Panc1 (cell line): ENCODE measurements at regions of chr16 and their contacts with region 1.

Region 1: DNA sequence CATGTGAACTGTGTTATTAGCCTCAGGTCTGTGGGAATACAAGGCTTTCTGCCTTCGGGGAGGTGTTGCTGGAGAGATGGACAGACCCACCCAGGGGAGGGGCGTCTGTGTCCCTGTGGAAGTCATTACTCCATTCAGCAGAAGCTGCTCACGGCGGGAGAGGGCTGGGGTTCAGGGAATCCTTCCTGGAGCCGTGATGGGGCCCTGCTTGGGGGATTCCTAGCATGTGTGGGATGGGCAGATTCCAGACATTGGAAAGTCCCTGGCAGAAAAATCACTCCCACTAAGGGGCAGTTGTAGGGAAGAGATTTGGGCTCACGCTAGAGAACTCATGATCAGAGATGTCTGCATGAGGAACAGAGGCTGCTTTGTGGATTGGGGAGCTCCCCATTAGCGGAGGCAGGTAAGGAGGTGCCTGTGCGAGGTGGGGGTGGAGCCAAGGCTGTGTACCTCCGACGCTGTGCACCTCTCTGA is 56.3 kb upstream of the IL34 start:
- DNase-seq: no peak
- ATAC-seq: peak; percentile 67
- H3K4me3 ChIP-seq: peak overlapping the region; percentile 15 to 24; a peak in 3 of 4 replicates
- H3K27ac ChIP-seq: peak overlapping the region; percentile 79
- H3K4me1 ChIP-seq: peaks cover 24% of the 10 kb centered on the region
- H3K27me3 ChIP-seq: no peaks in the 10 kb centered on the region
- CTCF ChIP-seq: no peak

Region 2: DNA sequence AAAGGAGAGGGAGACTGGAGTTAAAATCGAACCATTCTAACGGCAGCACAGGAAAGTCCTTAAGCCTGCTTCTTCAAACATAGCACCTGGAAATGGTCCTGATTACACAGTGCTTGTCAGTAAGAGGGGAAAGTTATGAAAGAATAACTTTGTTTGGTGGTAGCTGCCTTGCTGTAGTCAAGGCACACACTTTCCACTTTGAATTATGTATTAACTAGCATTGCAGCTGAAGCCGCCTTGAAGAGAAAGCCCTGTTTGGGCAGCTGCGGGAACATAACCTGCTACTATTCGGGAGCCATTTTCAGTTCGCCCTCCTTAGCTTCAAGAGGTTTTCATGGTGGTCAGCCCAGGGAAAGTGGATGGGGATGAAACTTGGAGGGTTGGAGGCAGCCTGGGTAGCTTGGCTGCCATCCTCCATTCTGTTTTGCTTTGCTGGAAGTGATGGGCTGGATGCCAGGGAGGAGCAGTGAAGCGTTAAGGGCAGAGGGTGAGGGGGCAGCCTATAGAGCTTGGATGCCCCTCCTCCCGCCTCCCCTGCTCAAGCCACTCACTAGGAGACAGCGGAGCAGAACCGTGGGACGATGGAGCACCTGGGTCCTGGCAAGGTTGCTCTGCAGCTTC is 1489.9 kb before region 1 on chr16:
- CTCF ChIA-PET with region 1: no interaction called
- POLR2A ChIA-PET with region 1: interaction called, 13 read pairs
- in situ Hi-C with region 1: no loop called
- intact Hi-C with region 1: no loop called
- DNase-seq: no peak
- ATAC-seq: no peak
- H3K4me3 ChIP-seq: no peak overlapping the region
- H3K27ac ChIP-seq: no peak overlapping the region
- H3K4me1 ChIP-seq: peaks cover 1% of the 10 kb centered on the region
- H3K27me3 ChIP-seq: no peaks in the 10 kb centered on the region
- CTCF ChIP-seq: no peak

Region 3: GRCh38 chr16:70388006-70388680 is 201.9 kb before region 1 on chr16:
- CTCF ChIA-PET with region 1: no interaction called
- POLR2A ChIA-PET with region 1: interaction called, 11 read pairs
- in situ Hi-C with region 1: no loop called
- intact Hi-C with region 1: no loop called
- DNase-seq: no peak
- ATAC-seq: no peak
- H3K4me3 ChIP-seq: no peak overlapping the region
- H3K27ac ChIP-seq: no peak overlapping the region
- H3K4me1 ChIP-seq: no peaks in the 10 kb centered on the region
- H3K27me3 ChIP-seq: no peaks in the 10 kb centered on the region
- CTCF ChIP-seq: no peak

Region 4: GRCh38 chr16:70612931-70613330 is 22.9 kb after region 1 on chr16:
- CTCF ChIA-PET with region 1: no interaction called
- POLR2A ChIA-PET with region 1: interaction called, 13 read pairs
- in situ Hi-C with region 1: no loop called
- intact Hi-C with region 1: no loop called
- DNase-seq: no peak
- ATAC-seq: no peak
- H3K4me3 ChIP-seq: no peak overlapping the region
- H3K27ac ChIP-seq: no peak overlapping the region; the same call in 1 of the 2 replicates
- H3K4me1 ChIP-seq: 0 out of 2 replicates have a peak, but pooled peaks cover 3% of the 10 kb centered on the region
- H3K27me3 ChIP-seq: no peaks in the 10 kb centered on the region
- CTCF ChIP-seq: no peak

Region 5: GRCh38 chr16:70646260-70647241 is 56.5 kb after region 1 on chr16 and contains the start of gene IL34:
- CTCF ChIA-PET with region 1: no interaction called
- POLR2A ChIA-PET with region 1: no interaction called
- in situ Hi-C with region 1: no loop called
- intact Hi-C with region 1: loop called (anchors 10 kb)
- DNase-seq: no peak
- ATAC-seq: no peak
- H3K4me3 ChIP-seq: no peak within 1 kb of the TSS
- H3K27ac ChIP-seq: no peak within 1 kb of the TSS
- H3K4me1 ChIP-seq: no peaks in the 10 kb centered on the region; the same call in 1 of the 2 replicates
- H3K27me3 ChIP-seq: no peaks in the 10 kb centered on the region
- CTCF ChIP-seq: no peak
- total RNA-seq, gene IL34: 5.8 TPM